Cardiac septum (tissue), 1 donor: ENCODE measurements at regions of chr3 and their contacts with region 1.

Region 1: GRCh38 chr3:157618075-157618760 is 115.0 kb upstream of the VEPH1 start:
- DNase-seq: no peak

Region 2: DNA sequence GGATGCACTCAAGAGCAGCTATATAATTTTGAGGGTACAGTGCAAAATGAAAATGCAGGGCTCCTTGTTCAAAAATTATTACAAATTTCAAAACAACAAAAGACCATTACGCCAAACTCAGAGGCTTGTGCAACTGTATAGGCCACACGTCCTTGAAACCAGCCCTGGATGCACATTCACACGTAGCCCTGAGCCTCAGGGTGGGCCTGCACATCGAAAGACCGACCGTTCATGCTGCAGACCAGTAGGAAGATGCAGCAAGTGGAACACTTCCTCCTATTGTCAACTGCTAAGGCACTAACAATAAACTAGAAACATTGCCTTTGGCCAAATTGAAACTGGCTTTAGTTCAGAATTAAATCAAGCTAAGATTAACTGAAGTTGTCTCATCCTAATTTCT is 313.3 kb after region 1 on chr3:
- intact Hi-C with region 1: no loop called
- DNase-seq: no peak

Region 3: GRCh38 chr3:158531334-158531733 is 913.1 kb after region 1 on chr3:
- intact Hi-C with region 1: loop called (anchors 2 kb)
- DNase-seq: no peak